ENCODE measurements at regions of chr12 and their contacts with region 1.

Region 1: DNA sequence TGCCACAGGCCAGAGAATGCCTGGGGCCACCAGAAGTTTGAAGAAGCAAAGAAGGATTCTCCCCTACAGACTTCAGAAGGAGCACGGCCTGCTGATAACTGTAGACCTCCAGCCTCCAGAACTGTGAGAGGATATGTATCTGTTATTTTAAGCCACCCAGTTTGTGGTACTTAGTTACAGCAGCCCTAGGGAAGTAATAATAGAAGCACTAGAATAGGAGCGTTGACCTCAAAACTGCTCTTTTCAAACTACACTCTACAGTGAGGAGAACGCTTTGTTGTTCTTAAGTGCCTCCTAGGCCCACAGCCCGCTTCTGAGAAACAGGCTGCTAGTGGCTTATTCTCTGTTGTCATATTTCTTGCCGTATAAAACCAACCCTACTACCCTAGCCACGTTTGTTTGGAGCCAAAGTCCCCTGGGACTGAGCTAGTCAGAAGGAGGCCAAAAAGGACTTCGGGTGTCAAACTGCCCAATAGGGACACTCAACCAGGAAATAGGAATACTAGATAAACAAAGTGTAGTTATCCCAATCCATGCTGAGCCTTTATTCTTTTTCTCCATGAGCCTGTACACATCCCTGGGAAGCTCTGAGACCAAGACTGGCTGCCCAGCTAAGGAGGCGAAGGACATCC is 38.5 kb upstream of the FRS2 start:
- DNase-seq: no peak
- ATAC-seq: peak; percentile 43 to 93 (median 77)
- H3K4me3 ChIP-seq: no peak overlapping the region
- H3K27ac ChIP-seq: peak overlapping the region in 9 of 10 donors; percentile 28 to 78 (median 66)
- H3K4me1 ChIP-seq: peaks cover 0 to 31% (median 16%) of the 10 kb centered on the region in 9 donors
- H3K27me3 ChIP-seq: no peaks in the 10 kb centered on the region
- CTCF ChIP-seq: no peak

Region 2: DNA sequence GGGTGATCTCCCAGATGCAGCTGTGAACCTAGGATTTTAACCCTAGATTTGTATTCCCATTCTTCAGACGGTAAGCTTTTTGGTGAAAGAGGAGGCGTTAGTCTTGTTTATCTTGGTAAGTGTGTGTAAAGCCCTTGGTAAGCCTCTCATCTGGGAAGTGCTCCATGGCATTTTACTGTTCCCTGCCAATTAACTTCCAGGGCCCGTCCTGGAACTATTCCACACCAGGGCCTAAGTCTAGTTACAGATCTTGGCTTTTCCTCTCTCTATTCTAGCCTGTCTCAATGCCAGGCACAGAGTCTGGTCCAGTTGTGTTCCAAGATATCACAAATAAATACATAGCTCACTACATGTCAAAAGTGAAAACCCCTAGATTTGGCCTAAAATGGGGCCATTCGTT is 29.8 kb before region 1 on chr12:
- intact Hi-C with region 1: loop called in 1 of 10 experiments (anchors 1 kb)
- DNase-seq: peak in 1 of 2 donors; percentile 25
- ATAC-seq: peak in 5 of 8 donors; percentile 64 to 79 (median 73)
- H3K4me3 ChIP-seq: no peak overlapping the region
- H3K27ac ChIP-seq: peak overlapping the region in 1 of 10 donors; percentile 7
- H3K4me1 ChIP-seq: peaks cover 0 to 8% (median 0%) of the 10 kb centered on the region in 9 donors
- H3K27me3 ChIP-seq: no peaks in the 10 kb centered on the region
- CTCF ChIP-seq: no peak

Region 3: GRCh38 chr12:69470189-69471075 is 38.7 kb after region 1 on chr12 and contains the start of gene FRS2:
- intact Hi-C with region 1: no loop called
- DNase-seq: peak; percentile 92 to 93
- ATAC-seq: peak; percentile 99 to 100 (median 99)
- H3K4me3 ChIP-seq: peak within 1 kb of the TSS; percentile 74 to 98 (median 86)
- H3K27ac ChIP-seq: peak within 1 kb of the TSS; percentile 81 to 98 (median 92)
- H3K4me1 ChIP-seq: peaks cover 3 to 51% (median 44%) of the 10 kb centered on the region in 9 donors
- H3K27me3 ChIP-seq: no peaks in the 10 kb centered on the region
- CTCF ChIP-seq: peak in 8 of 9 donors; percentile 13 to 43 (median 27)
- total RNA-seq, gene FRS2: 18.2 to 26.0 (median 20.0) TPM

Region 4: GRCh38 chr12:69662764-69663163 is 231.1 kb after region 1 on chr12:
- intact Hi-C with region 1: no loop called
- DNase-seq: no peak
- ATAC-seq: no peak
- H3K4me3 ChIP-seq: no peak overlapping the region
- H3K27ac ChIP-seq: no peak overlapping the region
- H3K4me1 ChIP-seq: peaks cover 0 to 11% (median 0%) of the 10 kb centered on the region in 9 donors
- H3K27me3 ChIP-seq: no peaks in the 10 kb centered on the region
- CTCF ChIP-seq: no peak

Measured in heart right ventricle (tissue), 16 donors.